ENCODE measurements at regions of chr6 and their contacts with region 1.

Region 1: DNA sequence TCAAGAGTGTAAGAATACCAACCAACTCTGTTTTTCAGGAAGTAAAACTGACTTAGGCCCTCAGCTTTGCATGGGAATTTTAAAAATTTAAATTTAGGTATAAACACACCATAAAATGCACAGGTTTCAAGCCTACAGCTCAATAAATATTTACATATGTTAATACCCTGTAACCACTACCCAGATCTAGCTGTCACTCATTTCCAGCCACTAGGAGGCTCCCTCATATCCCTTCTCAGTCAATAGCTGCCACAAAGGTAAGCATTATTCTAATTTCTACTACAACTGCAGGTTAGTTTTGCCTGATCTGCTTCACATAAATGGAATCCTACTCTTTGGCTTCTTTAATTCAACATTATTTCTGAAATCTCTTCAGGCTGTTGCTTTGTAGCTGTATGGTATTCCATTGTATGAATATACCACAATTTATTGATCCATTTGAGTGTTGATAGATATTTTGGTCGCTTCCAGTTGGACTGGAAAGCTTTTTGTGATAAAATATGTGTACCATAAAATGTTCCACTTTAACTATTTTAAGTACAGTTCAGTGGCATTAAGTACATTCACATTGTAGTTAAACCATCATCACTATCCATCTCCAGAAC is 32.5 kb upstream of the MEI4 start:
- DNase-seq: peak; percentile 32 to 47
- H3K4me3 ChIP-seq: no peak overlapping the region
- H3K4me3 Mint-ChIP-seq: no peak overlapping the region
- H3K27ac Mint-ChIP-seq: no peak overlapping the region
- H3K4me1 ChIP-seq: no peaks in the 10 kb centered on the region
- H3K4me1 Mint-ChIP-seq: no peaks in the 10 kb centered on the region
- H3K27me3 ChIP-seq: no peaks in the 10 kb centered on the region
- H3K27me3 Mint-ChIP-seq: no peaks in the 10 kb centered on the region
- CTCF ChIP-seq: peak; percentile 64

Region 2: GRCh38 chr6:77926198-77926752 is 305.9 kb after region 1 on chr6:
- CTCF ChIA-PET with region 1: interaction called, 13 read pairs
- POLR2A ChIA-PET with region 1: no interaction called
- intact Hi-C with region 1: loop called (anchors 1 kb)
- DNase-seq: peak in 1 of 2 experiments; percentile 25
- H3K4me3 ChIP-seq: no peak overlapping the region
- H3K4me3 Mint-ChIP-seq: no peak overlapping the region
- H3K27ac Mint-ChIP-seq: no peak overlapping the region
- H3K4me1 ChIP-seq: no peaks in the 10 kb centered on the region
- H3K4me1 Mint-ChIP-seq: no peaks in the 10 kb centered on the region
- H3K27me3 ChIP-seq: no peaks in the 10 kb centered on the region
- H3K27me3 Mint-ChIP-seq: no peaks in the 10 kb centered on the region
- CTCF ChIP-seq: peak; percentile 50 to 53